CD4-positive, alpha-beta T cell (primary cell): ENCODE measurements at regions of chr1 and their contacts with region 1.

Region 1: GRCh38 chr1:116191294-116191693 is 80.1 kb downstream of the MAB21L3 start:
- DNase-seq: no peak
- ATAC-seq: no peak
- H3K4me3 ChIP-seq: no peak overlapping the region
- H3K4me3 Mint-ChIP-seq: no peak overlapping the region
- H3K27ac ChIP-seq: no peak overlapping the region
- H3K27ac Mint-ChIP-seq: no peak overlapping the region
- H3K4me1 ChIP-seq: peaks cover 4% of the 10 kb centered on the region
- H3K4me1 Mint-ChIP-seq: peaks cover 16% of the 10 kb centered on the region
- H3K27me3 ChIP-seq: no peaks in the 10 kb centered on the region
- H3K27me3 Mint-ChIP-seq: peaks cover 5% of the 10 kb centered on the region
- CTCF ChIP-seq: no peak

Region 2: DNA sequence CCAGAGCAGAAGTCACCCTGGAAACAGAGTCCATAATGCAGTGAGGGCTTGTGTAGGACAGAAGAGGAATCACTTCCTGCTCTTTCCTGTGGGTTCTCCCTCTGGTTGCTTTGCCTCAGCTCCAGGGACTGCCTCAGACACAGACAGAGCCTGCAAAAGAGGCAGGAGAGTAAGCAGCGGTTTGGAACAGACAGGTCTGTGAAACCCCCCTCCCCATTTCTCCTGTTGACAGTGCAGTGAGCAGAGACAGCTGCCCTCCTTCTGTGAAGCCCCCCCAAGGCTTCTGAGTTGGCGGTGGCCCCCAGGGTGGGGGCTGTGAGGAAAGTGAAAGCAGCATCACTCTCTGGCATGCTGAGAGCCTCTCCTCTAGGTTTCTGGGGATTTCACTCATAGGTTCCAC is 27.1 kb before region 1 on chr1:
- CTCF ChIA-PET with region 1: no interaction called
- POLR2A ChIA-PET with region 1: no interaction called
- intact Hi-C with region 1: no loop called
- DNase-seq: no peak
- ATAC-seq: no peak
- H3K4me3 ChIP-seq: no peak overlapping the region
- H3K4me3 Mint-ChIP-seq: no peak overlapping the region
- H3K27ac ChIP-seq: no peak overlapping the region
- H3K27ac Mint-ChIP-seq: no peak overlapping the region
- H3K4me1 ChIP-seq: peaks cover 20% of the 10 kb centered on the region
- H3K4me1 Mint-ChIP-seq: peaks cover 19% of the 10 kb centered on the region
- H3K27me3 ChIP-seq: no peaks in the 10 kb centered on the region
- H3K27me3 Mint-ChIP-seq: no peaks in the 10 kb centered on the region
- CTCF ChIP-seq: no peak

Region 3: GRCh38 chr1:116205941-116206679 is 14.8 kb after region 1 on chr1:
- CTCF ChIA-PET with region 1: no interaction called
- POLR2A ChIA-PET with region 1: no interaction called
- intact Hi-C with region 1: loop called in 1 of 2 experiments (anchors 1 kb)
- DNase-seq: no peak
- ATAC-seq: no peak
- H3K4me3 ChIP-seq: no peak overlapping the region
- H3K4me3 Mint-ChIP-seq: no peak overlapping the region
- H3K27ac ChIP-seq: no peak overlapping the region
- H3K27ac Mint-ChIP-seq: no peak overlapping the region
- H3K4me1 ChIP-seq: no peaks in the 10 kb centered on the region
- H3K4me1 Mint-ChIP-seq: no peaks in the 10 kb centered on the region
- H3K27me3 ChIP-seq: peaks cover 0 to 2% of the 10 kb centered on the region in 2 experiments
- H3K27me3 Mint-ChIP-seq: no peaks in the 10 kb centered on the region
- CTCF ChIP-seq: no peak